Activated T-helper 1 cell treated with anti-CD3 and anti-CD28 coated beads, Interleukin-12 subunit alpha, Interleukin-12 subunit beta, Interleukin-2, Interleukin-4 antibody, amounts not matched to agents 30 ng/mL and 10 ng/mL and 1 ng/mL, durations not matched to agents 14 hours and 24 hours and 36 hours (primary cell): ENCODE measurements at regions of chr4 and their contacts with region 1.

Region 1: DNA sequence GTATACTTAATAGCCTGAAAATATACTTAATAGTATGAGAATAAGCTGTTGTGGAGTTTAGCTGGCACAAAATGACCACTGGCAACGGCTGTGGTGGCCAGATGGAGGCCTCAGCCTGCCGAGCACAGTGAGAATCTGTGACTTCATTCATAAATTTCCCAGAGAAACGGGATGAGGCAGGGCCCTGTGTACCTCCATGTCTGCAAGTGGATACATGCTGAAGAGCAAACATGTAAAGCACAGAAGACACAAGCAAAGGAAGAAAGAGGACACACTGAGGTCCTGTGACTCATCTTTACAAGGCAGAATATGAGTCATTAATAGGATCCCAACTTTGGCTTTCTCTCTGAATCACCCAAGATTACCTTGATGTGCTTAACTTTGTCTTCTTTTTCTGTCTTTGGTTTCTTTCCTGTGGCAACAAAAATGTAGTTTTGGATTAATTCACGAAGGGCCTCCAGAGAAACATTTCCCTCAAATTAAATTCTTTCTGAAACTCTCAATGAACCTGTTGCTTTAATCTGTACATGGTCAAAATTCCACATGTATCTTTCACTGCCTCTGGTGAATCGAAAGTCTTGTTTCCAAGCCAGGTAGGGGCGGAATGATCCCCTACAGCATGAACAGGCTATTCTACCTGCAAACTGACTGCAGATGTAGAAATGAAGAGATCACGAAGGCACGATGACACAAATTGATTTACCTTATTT is 56.4 kb downstream of the IRF2 start:
- DNase-seq: peak; percentile 21
- H3K4me3 Mint-ChIP-seq: peak overlapping the region; percentile 78
- H3K27ac Mint-ChIP-seq: peak overlapping the region; percentile 95
- H3K4me1 Mint-ChIP-seq: peaks cover 90% of the 10 kb centered on the region
- H3K27me3 Mint-ChIP-seq: no peaks in the 10 kb centered on the region

Region 2: GRCh38 chr4:183919141-183919540 is 498.8 kb before region 1 on chr4:
- intact Hi-C with region 1: no loop called
- DNase-seq: no peak
- H3K4me3 Mint-ChIP-seq: no peak overlapping the region
- H3K27ac Mint-ChIP-seq: no peak overlapping the region
- H3K4me1 Mint-ChIP-seq: no peaks in the 10 kb centered on the region
- H3K27me3 Mint-ChIP-seq: peaks cover 12% of the 10 kb centered on the region

Region 3: GRCh38 chr4:184282251-184282713 is 135.7 kb before region 1 on chr4:
- intact Hi-C with region 1: loop called (anchors 1 kb)
- DNase-seq: peak; percentile 53
- H3K4me3 Mint-ChIP-seq: peak overlapping the region; percentile 50
- H3K27ac Mint-ChIP-seq: peak overlapping the region; percentile 87
- H3K4me1 Mint-ChIP-seq: peaks cover 75% of the 10 kb centered on the region
- H3K27me3 Mint-ChIP-seq: no peaks in the 10 kb centered on the region

Region 4: DNA sequence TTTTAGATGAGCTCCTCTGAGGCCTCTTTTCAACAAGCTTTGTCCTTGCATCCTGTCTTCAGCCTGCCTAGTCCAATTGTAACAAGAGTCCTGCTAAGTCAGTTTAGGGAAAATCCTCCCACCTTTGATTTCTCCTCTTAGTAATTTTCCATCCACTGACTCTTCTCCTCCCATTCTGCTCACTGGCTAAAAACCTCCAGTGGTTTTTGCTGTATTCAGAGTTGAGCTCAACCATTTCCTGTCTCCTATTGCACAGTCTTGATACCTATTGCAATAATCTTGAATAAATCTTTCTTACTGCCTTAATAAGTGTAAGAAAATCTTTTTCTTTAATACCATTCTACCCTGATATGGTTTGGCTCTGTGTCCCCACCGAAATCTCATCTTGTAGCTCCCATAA is 82.4 kb before region 1 on chr4:
- intact Hi-C with region 1: loop called (anchors 2 kb)
- DNase-seq: no peak
- H3K4me3 Mint-ChIP-seq: peak overlapping the region; percentile 1
- H3K27ac Mint-ChIP-seq: peak overlapping the region; percentile 64
- H3K4me1 Mint-ChIP-seq: peaks cover 54% of the 10 kb centered on the region
- H3K27me3 Mint-ChIP-seq: no peaks in the 10 kb centered on the region

Region 5: DNA sequence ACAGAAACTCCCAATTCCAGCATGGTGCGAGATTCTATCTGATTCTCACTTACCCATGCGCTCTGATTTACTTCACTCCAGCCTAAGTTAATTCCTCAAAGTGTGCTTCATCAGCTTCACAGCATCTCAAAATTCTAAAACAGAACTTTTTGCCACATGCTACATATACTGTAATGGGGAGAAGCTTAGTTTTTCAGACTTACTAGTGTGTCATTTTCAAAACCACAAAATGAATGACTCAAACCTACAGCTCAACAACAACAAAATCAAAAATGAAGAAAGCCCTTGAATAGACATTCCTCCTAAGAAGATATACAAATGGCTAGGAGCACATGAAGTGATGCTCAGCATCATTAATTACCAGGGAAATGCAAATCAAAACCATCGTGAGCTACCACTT is 41.5 kb after region 1 on chr4:
- intact Hi-C with region 1: loop called (anchors 1 kb)
- DNase-seq: no peak
- H3K4me3 Mint-ChIP-seq: peak overlapping the region; percentile 35
- H3K27ac Mint-ChIP-seq: peak overlapping the region; percentile 83
- H3K4me1 Mint-ChIP-seq: peaks cover 82% of the 10 kb centered on the region
- H3K27me3 Mint-ChIP-seq: no peaks in the 10 kb centered on the region

Region 6: DNA sequence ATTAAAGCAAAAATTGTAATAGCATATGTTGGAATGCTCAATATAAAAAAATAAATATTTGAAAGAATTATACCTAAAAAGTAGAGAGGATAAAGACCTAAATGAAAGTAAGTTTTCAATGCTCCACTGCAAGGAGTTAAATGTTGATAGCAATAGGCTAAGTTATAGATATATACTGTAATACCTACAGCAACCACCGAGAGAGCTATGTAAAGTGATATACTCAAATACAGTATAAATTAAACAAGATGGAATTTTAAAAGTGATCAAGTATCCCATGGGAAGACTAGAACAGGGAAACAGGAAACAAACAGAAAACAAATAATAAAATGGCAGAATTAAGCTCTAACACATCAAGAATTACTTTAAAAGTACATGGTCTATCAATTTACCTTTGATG is 157.3 kb after region 1 on chr4:
- intact Hi-C with region 1: loop called (anchors 1 kb)
- DNase-seq: no peak
- H3K4me3 Mint-ChIP-seq: no peak overlapping the region
- H3K27ac Mint-ChIP-seq: peak overlapping the region; percentile 55
- H3K4me1 Mint-ChIP-seq: peaks cover 19% of the 10 kb centered on the region
- H3K27me3 Mint-ChIP-seq: no peaks in the 10 kb centered on the region

Region 7: GRCh38 chr4:184588893-184589292 is 170.9 kb after region 1 on chr4:
- intact Hi-C with region 1: no loop called
- DNase-seq: no peak
- H3K4me3 Mint-ChIP-seq: no peak overlapping the region
- H3K27ac Mint-ChIP-seq: no peak overlapping the region
- H3K4me1 Mint-ChIP-seq: peaks cover 16% of the 10 kb centered on the region
- H3K27me3 Mint-ChIP-seq: no peaks in the 10 kb centered on the region